Heart right ventricle (tissue), 16 donors: ENCODE measurements at regions of chr2 and their contacts with region 1.

Region 1: GRCh38 chr2:239002954-239003588 is 155.2 kb downstream of the TWIST2 start:
- DNase-seq: no peak
- ATAC-seq: peak in 5 of 8 donors; percentile 16 to 73 (median 59)
- H3K4me3 ChIP-seq: peak overlapping the region in 6 of 10 donors; percentile 9 to 28 (median 22)
- H3K27ac ChIP-seq: peak overlapping the region in 5 of 10 donors; percentile 26 to 51 (median 41)
- H3K4me1 ChIP-seq: peaks cover 0 to 7% (median 0%) of the 10 kb centered on the region in 9 donors
- H3K27me3 ChIP-seq: peaks cover 0 to 40% (median 16%) of the 10 kb centered on the region in 7 donors
- CTCF ChIP-seq: no peak

Region 2: GRCh38 chr2:238914648-238915015 is 88.4 kb before region 1 on chr2:
- intact Hi-C with region 1: no loop called
- DNase-seq: no peak
- ATAC-seq: no peak
- H3K4me3 ChIP-seq: no peak overlapping the region
- H3K27ac ChIP-seq: no peak overlapping the region
- H3K4me1 ChIP-seq: no peaks in the 10 kb centered on the region
- H3K27me3 ChIP-seq: peaks cover 0 to 35% (median 6%) of the 10 kb centered on the region in 7 donors
- CTCF ChIP-seq: no peak

Region 3: DNA sequence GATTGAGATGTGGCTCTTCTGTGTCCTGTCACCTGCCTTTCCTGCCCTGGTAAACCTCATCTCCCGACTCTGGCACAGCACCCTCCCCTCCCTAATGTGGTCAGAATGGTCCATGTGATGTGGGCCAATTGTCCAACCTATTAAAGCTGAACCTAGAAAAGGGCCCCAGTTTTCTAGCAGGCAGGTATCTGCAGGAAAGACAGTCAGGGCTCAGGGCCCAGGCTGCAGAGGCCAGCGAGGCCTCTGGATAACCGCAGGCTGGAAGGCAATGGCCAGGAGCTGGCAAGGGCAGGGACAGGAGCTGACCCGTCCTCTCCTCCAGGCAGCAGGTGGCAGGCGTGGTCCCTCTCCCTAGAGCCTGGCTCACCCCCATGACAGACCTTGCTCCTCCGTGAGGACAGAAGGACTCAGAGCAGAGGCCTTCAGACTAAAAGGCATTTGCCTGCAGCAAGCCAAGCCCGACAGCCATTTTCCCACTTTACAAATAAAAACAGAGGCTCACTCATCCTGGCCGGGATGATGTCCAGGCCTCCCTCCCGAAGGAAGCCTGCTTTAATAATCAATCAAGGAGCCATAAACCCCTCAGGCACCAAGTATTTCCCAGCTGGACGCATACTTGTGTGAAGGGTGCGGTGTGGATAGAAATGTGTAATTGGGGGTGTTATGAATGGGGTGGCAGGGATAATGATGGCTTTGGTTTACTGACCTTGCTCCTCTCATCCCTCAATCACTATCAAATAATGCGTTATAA is 48.1 kb before region 1 on chr2:
- intact Hi-C with region 1: loop called in 1 of 10 experiments (anchors 1 kb)
- DNase-seq: no peak
- ATAC-seq: no peak
- H3K4me3 ChIP-seq: no peak overlapping the region
- H3K27ac ChIP-seq: no peak overlapping the region
- H3K4me1 ChIP-seq: no peaks in the 10 kb centered on the region
- H3K27me3 ChIP-seq: peaks cover 0 to 40% (median 22%) of the 10 kb centered on the region in 7 donors
- CTCF ChIP-seq: no peak

Region 4: GRCh38 chr2:239087046-239087710 is 84.1 kb after region 1 on chr2:
- intact Hi-C with region 1: no loop called
- DNase-seq: no peak
- ATAC-seq: no peak
- H3K4me3 ChIP-seq: no peak overlapping the region
- H3K27ac ChIP-seq: no peak overlapping the region
- H3K4me1 ChIP-seq: no peaks in the 10 kb centered on the region
- H3K27me3 ChIP-seq: no peaks in the 10 kb centered on the region
- CTCF ChIP-seq: no peak